Esophagus muscularis mucosa (tissue), 4 donors: ENCODE measurements at regions of chr1 and their contacts with region 1.

Region 1: GRCh38 chr1:28518000-28518744 is 12.3 kb downstream of the RCC1 start:
- DNase-seq: peak; percentile 97
- H3K4me3 ChIP-seq: peak overlapping the region; percentile 67 to 76 (median 74)
- H3K27ac ChIP-seq: peak overlapping the region; percentile 84 to 89 (median 86)
- H3K4me1 ChIP-seq: peaks cover 9 to 21% (median 16%) of the 10 kb centered on the region in 4 donors
- H3K27me3 ChIP-seq: no peaks in the 10 kb centered on the region
- CTCF ChIP-seq: peak; percentile 99 to 100 (median 100)
- EP300 ChIP-seq: no peak
- POLR2A ChIP-seq: no peak

Region 2: DNA sequence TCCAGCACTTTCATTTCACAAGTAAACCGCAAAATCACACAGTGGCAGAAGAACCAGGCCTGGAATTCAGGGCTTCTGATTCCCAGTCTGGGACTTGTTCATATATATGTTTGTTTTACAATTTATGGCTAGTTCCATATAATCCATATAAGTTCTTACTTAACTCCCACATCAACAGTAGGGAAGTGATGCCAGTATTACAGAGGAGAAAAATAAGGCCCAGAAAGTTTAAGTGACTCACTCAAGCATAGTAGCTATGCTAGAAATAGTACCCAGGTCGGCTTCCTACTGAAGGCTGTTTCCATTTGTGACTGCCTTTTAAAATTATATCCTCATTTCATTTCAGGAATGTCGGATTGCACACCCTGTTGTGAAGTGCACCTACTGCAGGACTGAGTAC is 791.0 kb before region 1 on chr1:
- intact Hi-C with region 1: no loop called
- DNase-seq: no peak
- H3K4me3 ChIP-seq: peak overlapping the region in 3 of 4 donors; percentile 96 to 100 (median 98)
- H3K27ac ChIP-seq: peak overlapping the region; percentile 95 to 99 (median 97)
- H3K4me1 ChIP-seq: peaks cover 13 to 42% (median 27%) of the 10 kb centered on the region in 4 donors
- H3K27me3 ChIP-seq: no peaks in the 10 kb centered on the region
- CTCF ChIP-seq: no peak
- EP300 ChIP-seq: no peak
- POLR2A ChIP-seq: no peak

Region 3: GRCh38 chr1:28480308-28480707 is 37.9 kb before region 1 on chr1:
- intact Hi-C with region 1: no loop called
- DNase-seq: no peak
- H3K4me3 ChIP-seq: no peak overlapping the region
- H3K27ac ChIP-seq: no peak overlapping the region
- H3K4me1 ChIP-seq: no peaks in the 10 kb centered on the region
- H3K27me3 ChIP-seq: no peaks in the 10 kb centered on the region
- CTCF ChIP-seq: no peak
- EP300 ChIP-seq: no peak
- POLR2A ChIP-seq: no peak

Region 4: DNA sequence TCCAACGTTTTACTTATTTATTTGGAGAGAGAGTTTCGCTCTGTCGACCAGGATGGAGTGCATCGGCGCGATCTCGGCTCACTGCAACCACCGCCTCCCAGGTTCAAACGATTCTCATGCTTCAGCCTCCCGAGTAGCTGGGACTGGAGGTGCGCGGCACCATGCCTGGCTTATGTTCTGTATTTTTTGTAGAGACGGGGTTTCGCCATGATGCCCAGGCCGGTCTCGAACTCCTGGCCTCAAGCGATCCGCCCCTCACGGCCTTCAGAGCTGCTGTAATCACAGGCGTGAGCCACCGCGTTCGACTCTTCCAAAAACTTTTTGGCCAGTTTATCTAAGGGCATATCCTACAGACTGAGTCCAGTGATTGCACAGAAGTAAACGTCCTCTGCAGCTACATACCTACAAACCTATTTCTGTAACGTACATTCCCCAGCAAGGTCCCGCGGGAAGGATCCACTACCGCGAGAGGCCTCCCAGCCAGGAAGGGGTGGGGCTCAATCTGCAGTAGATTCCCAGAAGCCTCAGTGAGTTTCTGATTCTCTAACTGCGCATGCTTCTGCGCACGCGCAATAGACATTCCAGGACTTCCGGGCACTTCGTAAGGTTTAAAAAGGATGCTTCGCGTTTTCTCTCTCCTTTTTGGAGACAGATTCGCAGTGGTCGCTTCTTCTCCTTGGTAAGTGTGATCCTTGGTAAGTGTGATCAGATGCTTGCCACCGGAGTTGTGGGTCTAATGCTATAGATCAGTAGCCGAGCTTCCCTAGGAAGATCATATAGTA is 12.6 kb before region 1 on chr1 and contains the start of gene RCC1:
- intact Hi-C with region 1: no loop called
- DNase-seq: peak; percentile 99
- H3K4me3 ChIP-seq: peak within 1 kb of the TSS; percentile 64 to 73 (median 68)
- H3K27ac ChIP-seq: peak within 1 kb of the TSS; percentile 84 to 91 (median 88)
- H3K4me1 ChIP-seq: peaks cover 32 to 49% (median 41%) of the 10 kb centered on the region in 4 donors
- H3K27me3 ChIP-seq: no peaks in the 10 kb centered on the region
- CTCF ChIP-seq: peak in 1 of 3 experiments; percentile 22
- EP300 ChIP-seq: no peak
- POLR2A ChIP-seq: peak; percentile 96
- total RNA-seq, gene RCC1: 8.3 to 17.1 (median 11.3) TPM

Region 5: DNA sequence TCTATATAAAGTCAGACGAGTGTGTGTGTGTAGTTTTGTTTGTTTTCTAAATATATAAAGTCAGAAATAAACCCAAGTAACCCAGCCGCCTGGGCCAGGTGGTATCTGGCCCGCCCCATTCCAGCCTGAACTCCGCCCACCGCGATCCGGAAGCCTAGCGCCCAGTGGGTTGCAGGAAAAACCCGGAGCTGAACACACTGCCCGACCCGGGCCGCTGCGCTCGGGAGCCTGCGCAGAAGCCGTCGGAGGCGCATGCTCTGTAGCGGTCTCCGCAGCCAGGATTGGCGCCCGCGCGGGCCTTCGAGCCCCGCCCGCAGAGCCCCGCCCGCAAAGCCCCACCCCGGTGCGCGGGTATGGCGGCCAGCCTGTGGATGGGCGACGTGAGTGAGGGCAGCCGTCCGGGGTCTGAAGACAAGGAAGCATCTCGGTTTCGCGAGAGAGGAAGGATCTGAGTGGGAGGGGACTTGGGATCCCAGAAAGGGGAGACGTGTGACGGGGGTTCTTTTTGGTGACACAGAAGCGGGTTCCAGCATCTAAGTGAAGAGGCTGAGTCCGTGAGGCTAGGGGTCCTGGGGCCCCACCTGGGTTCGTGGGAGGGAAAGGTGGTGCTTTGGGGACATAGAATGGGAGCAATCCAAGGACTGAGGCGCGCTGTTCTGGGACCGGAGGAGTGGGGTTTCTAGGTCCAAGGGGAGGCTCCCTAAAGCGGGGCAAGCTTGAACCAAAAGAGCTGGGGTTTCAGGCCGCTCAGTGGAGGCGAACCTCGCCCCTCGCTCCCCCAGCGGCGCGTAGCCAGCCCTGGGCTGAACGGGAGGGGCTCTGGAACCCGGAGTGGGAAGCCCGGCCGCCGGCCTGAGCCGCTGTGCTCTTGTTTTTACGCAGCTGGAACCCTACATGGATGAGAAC is 34.8 kb after region 1 on chr1 and contains the start of gene TRNAU1AP:
- intact Hi-C with region 1: loop called (anchors 5 kb)
- DNase-seq: peak; percentile 98
- H3K4me3 ChIP-seq: peak within 1 kb of the TSS; percentile 67 to 98 (median 74)
- H3K27ac ChIP-seq: peak within 1 kb of the TSS; percentile 84 to 93 (median 87)
- H3K4me1 ChIP-seq: peaks cover 11 to 21% (median 19%) of the 10 kb centered on the region in 4 donors
- H3K27me3 ChIP-seq: no peaks in the 10 kb centered on the region
- CTCF ChIP-seq: peak in 1 of 3 experiments; percentile 45
- EP300 ChIP-seq: no peak
- POLR2A ChIP-seq: peak; percentile 77
- total RNA-seq, gene TRNAU1AP: 19.4 to 34.1 (median 23.2) TPM

Region 6: DNA sequence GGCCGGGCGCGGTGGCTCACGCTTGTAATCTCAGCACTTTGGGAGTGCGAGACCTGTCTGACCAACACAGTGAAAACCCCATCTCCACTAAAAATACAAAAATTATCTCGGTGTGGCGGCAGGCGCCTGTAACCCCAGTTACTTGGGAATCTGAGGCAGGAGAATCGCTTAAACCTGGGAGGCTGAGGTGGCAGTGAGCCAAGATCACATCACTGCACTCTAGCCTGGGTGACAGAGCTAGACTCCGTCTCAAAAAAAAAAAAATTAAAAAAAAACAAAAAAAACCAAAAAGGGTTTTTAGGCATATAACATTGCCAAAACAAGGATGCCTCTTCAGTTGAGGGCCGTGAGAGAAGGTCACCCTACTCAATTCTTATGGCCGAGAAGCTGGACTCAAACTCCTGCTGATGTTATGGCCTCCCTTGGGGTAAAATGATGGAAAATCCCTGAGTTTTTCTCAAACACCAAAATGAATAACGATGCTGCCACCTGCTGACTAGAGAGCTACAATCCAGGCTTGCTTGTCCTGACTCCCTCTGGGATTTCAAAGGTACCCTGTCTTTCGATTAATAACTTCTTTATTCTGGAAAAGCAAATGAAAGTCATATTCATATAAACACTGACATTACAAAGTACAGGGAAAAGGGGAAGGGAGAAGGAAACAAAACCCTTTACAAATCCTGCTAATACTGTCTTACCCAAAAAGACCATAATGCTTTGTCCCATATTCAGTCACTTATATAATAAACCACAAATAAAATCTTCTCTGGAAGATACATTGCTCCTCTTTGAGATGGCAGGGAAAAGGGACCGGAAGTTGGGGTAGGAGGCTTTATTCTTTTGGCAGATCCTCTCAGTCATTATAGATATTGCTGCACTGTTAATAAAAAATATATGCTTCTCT is 84.6 kb after region 1 on chr1:
- intact Hi-C with region 1: loop called (anchors 2 kb)
- DNase-seq: no peak
- H3K4me3 ChIP-seq: no peak overlapping the region
- H3K27ac ChIP-seq: peak overlapping the region; percentile 3 to 32 (median 22)
- H3K4me1 ChIP-seq: peaks cover 0 to 15% (median 11%) of the 10 kb centered on the region in 4 donors
- H3K27me3 ChIP-seq: no peaks in the 10 kb centered on the region
- CTCF ChIP-seq: peak; percentile 66 to 80 (median 68)
- EP300 ChIP-seq: no peak
- POLR2A ChIP-seq: no peak

Region 7: DNA sequence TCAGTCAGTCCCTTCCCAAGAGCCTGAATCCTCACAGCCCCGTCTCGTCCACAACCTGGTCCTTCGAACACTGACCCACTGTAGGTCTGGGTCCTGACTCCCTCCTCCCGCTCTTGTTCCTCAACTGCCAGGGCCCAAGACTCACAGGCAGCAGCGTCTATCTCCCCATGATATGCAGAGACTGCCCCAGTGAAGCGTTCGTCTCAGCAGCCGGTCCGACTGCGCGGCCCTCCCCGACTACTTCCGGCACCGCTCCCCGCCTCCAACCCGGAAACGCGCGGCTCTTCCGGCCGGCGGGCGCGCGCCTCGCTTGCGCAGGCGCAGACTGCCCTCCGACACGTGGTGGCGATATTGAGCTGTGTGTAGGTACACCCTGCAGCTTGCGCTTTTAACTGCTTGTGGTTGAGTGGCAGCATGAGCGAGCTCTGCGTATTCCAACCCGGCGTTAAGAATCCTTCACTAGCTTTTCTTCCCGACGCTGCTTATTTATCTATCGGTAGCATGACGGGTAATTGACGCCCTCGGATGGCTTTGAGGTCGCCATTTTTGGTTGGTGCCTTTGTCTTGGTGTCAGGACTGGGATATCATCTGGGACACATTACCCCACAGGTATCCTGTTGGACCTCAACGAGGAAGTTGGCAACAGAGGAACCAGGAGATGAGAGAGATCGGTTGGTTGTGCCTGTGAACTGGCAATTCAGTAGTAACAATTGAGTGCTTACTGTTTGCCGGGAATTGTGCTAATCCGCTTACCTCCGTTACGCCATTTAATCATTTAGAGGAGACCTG is 124.9 kb after region 1 on chr1 and contains the start of gene TAF12:
- intact Hi-C with region 1: no loop called
- DNase-seq: peak; percentile 96
- H3K4me3 ChIP-seq: peak within 1 kb of the TSS; percentile 77 to 89 (median 82)
- H3K27ac ChIP-seq: peak within 1 kb of the TSS; percentile 83 to 94 (median 88)
- H3K4me1 ChIP-seq: peaks cover 30 to 60% (median 43%) of the 10 kb centered on the region in 4 donors
- H3K27me3 ChIP-seq: no peaks in the 10 kb centered on the region
- CTCF ChIP-seq: peak; percentile 35 to 51 (median 36)
- EP300 ChIP-seq: no peak
- POLR2A ChIP-seq: peak; percentile 87
- total RNA-seq, gene TAF12: 16.1 to 17.6 (median 17.1) TPM

Region 8: DNA sequence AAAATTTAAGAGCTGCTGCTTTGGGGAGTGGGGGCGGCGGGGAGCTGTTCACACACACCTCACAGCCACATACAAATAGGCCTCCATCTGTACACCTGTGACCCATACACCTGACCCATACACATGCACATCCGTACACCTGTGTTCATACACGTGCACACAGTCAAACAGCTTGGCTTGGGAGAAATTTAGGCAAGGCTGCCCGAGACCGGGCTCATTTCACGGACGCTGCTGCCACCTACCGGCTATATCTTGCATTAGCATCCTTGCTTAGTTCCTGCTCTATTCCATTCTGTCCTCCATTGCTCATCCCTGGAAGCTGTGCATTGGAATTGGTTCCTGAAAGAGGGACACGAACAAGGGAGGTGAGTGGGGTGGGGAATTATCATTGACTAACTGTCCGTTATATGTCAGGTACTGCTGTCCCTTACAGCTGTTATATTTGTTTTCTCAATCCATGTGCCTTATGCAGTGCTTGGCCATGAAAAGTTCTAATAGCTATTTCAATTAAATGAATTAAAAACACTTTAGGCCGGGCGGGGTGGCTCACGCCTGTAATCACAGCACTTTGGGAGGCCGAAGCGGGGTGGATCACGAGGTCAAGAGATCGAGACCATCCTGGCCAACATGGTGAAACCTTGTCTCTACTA is 359.1 kb after region 1 on chr1:
- intact Hi-C with region 1: loop called (anchors 5 kb)
- DNase-seq: peak; percentile 94
- H3K4me3 ChIP-seq: no peak overlapping the region
- H3K27ac ChIP-seq: no peak overlapping the region
- H3K4me1 ChIP-seq: peaks cover 0 to 12% (median 4%) of the 10 kb centered on the region in 4 donors
- H3K27me3 ChIP-seq: peaks cover 0 to 8% (median 0%) of the 10 kb centered on the region in 4 donors
- CTCF ChIP-seq: peak; percentile 87 to 96 (median 91)
- EP300 ChIP-seq: no peak
- POLR2A ChIP-seq: no peak